Motor neuron (in vitro differentiated cells): ENCODE measurements at regions of chr11 and their contacts with region 1.

Region 1: DNA sequence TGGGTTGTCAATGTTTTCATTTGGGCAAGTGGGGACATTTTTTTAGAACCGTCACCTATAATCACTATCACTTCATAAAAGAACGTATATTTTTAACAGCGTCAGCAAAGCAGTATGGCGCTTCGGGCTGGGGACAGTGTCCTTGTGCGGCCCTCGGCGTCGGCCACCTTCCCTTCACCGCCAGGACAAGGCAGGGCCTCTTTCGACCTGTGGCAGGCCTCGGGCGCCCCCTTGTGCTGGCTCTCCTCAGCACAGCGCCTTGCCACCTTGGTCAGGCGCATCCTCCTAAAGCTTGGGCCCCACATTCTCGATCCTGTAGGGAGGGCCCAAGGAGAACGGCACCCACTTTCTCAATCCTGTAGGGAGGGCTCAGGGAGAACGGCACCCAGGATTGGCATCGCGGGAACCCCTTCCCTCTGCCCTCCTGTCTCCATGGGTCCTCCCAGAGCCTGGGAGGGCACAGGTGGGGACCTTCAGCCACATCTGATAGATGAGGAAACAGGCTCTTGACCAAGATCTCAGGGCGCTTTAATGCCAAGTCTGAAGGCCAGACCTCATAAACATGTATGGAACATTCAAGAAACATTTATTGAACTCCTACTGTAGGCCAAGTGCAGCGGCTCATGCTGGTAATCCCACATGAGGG is 11.5 kb upstream of the FADD start:
- ATAC-seq: peak; percentile 89 to 95 (median 92)
- H3K4me3 ChIP-seq: no peak overlapping the region
- H3K27ac ChIP-seq: no peak overlapping the region
- H3K4me1 ChIP-seq: peaks cover 0 to 3% of the 10 kb centered on the region in 2 donors

Region 2: GRCh38 chr11:69683764-69684333 is 507.8 kb before region 1 on chr11:
- in situ Hi-C with region 1: loop called in 5 of 9 experiments (anchors 10 to 25 kb)
- ATAC-seq: peak in 2 of 8 experiments; percentile 24 to 46
- H3K4me3 ChIP-seq: no peak overlapping the region
- H3K27ac ChIP-seq: no peak overlapping the region
- H3K4me1 ChIP-seq: no peaks in the 10 kb centered on the region

Region 3: DNA sequence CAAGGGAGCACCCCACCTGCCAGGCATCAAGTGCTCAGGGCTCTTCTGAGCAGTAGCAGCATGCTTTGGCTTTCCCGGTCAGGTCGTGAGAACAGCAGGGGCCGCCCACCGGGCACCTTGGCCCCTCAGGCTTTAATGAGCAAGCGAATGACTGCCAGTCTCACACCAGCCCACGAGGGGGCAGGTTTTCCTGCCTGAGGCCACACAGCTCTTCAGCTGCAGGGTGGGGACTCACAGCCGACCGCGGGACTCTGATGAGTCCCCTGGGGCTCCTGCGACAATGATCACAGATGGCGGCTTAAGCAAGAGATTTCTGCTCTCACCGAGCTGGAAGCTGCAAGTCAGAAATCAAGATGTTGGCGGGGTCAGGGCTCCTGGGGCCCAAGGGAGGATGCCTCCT is 473.5 kb before region 1 on chr11:
- in situ Hi-C with region 1: loop called in 4 of 9 experiments (anchors 25 kb)
- ATAC-seq: peak; percentile 82 to 98 (median 95)
- H3K4me3 ChIP-seq: no peak overlapping the region
- H3K27ac ChIP-seq: no peak overlapping the region
- H3K4me1 ChIP-seq: peaks cover 12 to 17% of the 10 kb centered on the region in 2 donors

Region 4: GRCh38 chr11:69909561-69910496 is 281.8 kb before region 1 on chr11:
- in situ Hi-C with region 1: loop called in 7 of 9 experiments (anchors 5 to 25 kb)
- ATAC-seq: peak in 5 of 8 experiments; percentile 23 to 67 (median 32)
- H3K4me3 ChIP-seq: no peak overlapping the region
- H3K27ac ChIP-seq: no peak overlapping the region
- H3K4me1 ChIP-seq: no peaks in the 10 kb centered on the region

Region 5: GRCh38 chr11:69918938-69919650 is 272.5 kb before region 1 on chr11:
- in situ Hi-C with region 1: loop called (anchors 5 to 25 kb)
- ATAC-seq: peak; percentile 61 to 93 (median 84)
- H3K4me3 ChIP-seq: no peak overlapping the region
- H3K27ac ChIP-seq: no peak overlapping the region
- H3K4me1 ChIP-seq: peaks cover 4 to 7% of the 10 kb centered on the region in 2 donors

Region 6: DNA sequence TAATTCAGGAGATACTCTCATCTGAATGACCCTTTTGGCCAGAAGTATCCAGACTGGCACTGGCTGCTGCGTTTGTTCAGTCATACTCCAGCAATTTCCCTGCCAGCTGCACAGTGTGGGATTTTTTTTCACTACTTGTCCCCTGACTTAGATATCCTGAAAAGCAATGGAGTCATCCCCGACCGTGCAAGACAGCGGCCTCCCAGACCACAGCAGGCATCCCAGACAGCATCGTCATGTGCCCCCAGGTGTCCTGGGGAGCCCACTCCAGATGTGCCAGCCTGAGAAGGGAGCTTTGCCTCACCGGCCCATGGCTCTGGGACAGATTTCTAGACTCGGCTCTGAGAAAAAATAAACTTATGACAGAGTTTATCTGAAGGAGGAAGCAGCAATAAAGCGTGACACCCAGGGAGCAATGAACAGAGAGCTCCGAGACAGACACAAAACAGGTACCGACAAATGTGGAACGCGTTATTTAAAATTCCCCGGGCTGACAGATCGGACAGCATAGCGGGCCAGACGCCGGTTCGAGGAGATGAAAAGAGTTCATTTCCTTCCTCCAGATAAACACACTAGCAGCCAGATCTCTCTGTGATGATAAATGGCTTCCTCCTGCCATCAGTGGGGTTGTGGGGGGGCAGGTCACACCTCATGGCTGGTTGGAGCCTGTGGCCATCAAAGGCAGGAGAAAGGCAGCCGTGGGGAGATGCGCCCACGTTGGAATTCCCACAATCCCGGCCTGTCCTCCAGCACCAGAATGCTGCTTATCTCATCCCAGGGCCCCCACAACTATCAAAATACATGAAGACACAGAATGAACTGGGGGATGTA is 266.0 kb before region 1 on chr11:
- in situ Hi-C with region 1: loop called in 4 of 9 experiments (anchors 10 to 25 kb)
- ATAC-seq: peak in 1 of 8 experiments; percentile 31
- H3K4me3 ChIP-seq: no peak overlapping the region
- H3K27ac ChIP-seq: no peak overlapping the region
- H3K4me1 ChIP-seq: peaks cover 0 to 9% of the 10 kb centered on the region in 2 donors

Region 7: DNA sequence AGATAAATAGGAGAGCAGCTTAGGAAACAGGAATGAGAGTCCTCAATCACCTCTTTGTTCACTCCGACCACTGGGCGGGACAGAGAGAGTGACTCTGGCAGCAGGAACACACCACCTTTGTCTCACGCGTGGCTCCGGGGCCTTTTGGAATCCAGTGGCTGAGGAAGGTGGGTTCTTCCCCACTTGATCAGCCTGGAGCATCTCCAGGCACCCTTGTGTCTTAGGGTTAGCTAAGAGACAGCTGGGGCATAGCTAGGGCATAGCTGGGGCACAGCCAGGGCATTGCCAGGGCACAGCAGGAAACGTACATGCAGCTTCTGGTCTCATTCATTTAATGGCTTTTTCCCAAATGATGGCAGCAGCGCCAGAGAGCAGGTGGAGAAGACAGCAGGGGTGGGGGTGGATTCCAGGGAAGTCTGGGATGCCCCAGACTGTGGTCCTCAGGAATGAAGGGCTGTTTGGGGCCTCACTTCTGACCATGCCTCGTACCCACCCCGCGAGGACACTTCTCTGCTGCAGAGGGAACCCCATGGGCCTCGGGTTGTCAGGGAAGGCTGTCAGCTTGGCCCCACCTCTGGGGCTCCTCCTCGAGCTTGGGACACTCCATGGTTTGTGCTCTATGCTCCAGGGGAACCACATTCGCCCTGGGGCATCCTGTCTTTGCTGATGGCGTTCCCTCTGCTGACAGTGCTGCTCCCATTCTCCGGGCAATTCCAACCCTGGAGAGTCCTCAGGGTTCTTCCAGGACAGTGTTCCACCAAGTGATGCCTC is 1091.1 kb after region 1 on chr11:
- in situ Hi-C with region 1: no loop called
- ATAC-seq: no peak
- H3K4me3 ChIP-seq: no peak overlapping the region
- H3K27ac ChIP-seq: no peak overlapping the region
- H3K4me1 ChIP-seq: no peaks in the 10 kb centered on the region